Cardiac septum (tissue), 1 donor: ENCODE measurements at regions of chr20 and their contacts with region 1.

Region 1: GRCh38 chr20:31859998-31860709 is 10.2 kb downstream of the DUSP15 start:
- DNase-seq: no peak

Region 2: GRCh38 chr20:31890646-31891045 is 30.5 kb after region 1 on chr20:
- intact Hi-C with region 1: loop called (anchors 2 kb)
- DNase-seq: no peak

Region 3: GRCh38 chr20:32031007-32031958 is 171.1 kb after region 1 on chr20:
- intact Hi-C with region 1: loop called (anchors 2 kb)
- DNase-seq: peak; percentile 88